ENCODE measurements at regions of chr14 and their contacts with region 1.

Region 1: DNA sequence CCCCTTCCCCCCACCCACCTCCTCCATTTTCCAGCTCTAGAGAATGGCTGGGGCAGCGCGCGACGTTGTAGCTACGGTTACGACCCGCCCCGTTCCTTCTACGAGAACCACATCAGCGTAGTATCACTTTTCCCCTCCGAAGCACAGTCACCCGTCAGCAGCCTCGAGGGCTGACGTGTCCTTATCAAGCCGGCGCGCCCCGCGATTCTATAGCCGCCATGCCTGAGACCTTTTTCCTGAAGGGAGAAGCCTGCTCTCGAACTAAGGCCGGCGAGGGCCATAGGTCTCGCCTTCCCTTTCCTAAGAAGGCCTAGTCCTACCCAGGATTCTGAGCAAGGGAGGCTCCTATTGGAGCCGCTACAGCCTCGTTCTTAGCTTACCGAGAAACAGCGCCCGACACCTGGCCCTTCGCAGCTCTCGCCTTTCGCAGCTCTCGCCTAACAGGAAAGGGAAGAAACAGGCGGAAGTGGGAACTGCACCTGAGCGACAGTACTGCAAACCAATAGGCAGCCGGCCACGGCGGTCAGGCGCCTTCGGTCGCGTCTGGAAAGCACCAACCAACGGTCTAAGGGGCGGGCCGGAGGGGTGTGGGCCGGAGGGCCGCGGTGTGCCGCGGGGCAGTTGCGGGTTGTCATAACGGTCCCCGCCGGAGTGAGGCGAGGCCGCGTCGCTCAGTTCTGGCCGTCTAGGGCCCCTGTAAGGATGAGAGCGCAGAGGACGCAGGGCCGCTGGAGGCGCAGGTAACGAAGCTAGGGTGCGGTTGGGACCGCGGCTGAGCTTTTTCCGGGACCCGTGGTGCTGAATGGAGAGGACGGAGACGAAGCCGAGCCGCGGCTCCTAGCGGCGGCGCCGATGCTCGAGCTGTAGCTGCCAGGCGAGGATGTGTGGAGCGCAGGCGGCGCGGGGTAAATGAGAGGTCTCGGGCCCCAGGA is at the starts of genes MGAT2 and RPL36AL:
- DNase-seq: peak; percentile 99
- ATAC-seq: peak; percentile 97
- H3K4me3 ChIP-seq: peak within 1 kb of the TSS; percentile 78 to 98 (median 93)
- H3K27ac ChIP-seq: peak within 1 kb of the TSS; percentile 94 to 99 (median 96)
- H3K4me1 ChIP-seq: peaks cover 20 to 34% of the 10 kb centered on the region in 2 donors
- H3K27me3 ChIP-seq: no peaks in the 10 kb centered on the region
- CTCF ChIP-seq: peak; percentile 7 to 53 (median 38)
- POLR2A ChIP-seq: peak; percentile 96 to 98
- total RNA-seq, gene MGAT2: 7.2 to 11.5 (median 9.6) TPM
- total RNA-seq, gene RPL36AL: 156 to 226 (median 203) TPM

Region 2: GRCh38 chr14:49585803-49586672 is 34.4 kb before region 1 on chr14 and contains the start of gene RPS29:
- in situ Hi-C with region 1: no loop called
- intact Hi-C with region 1: loop called (anchors 1 kb)
- DNase-seq: peak; percentile 97 to 98
- ATAC-seq: peak; percentile 99
- H3K4me3 ChIP-seq: peak within 1 kb of the TSS; percentile 78 to 99 (median 93)
- H3K27ac ChIP-seq: peak within 1 kb of the TSS; percentile 94 to 98 (median 96)
- H3K4me1 ChIP-seq: peaks cover 27 to 29% of the 10 kb centered on the region in 2 donors
- H3K27me3 ChIP-seq: no peaks in the 10 kb centered on the region
- CTCF ChIP-seq: no peak
- POLR2A ChIP-seq: peak; percentile 94 to 96
- total RNA-seq, gene RPS29: 6,799 to 10,395 (median 8,793) TPM

Region 3: DNA sequence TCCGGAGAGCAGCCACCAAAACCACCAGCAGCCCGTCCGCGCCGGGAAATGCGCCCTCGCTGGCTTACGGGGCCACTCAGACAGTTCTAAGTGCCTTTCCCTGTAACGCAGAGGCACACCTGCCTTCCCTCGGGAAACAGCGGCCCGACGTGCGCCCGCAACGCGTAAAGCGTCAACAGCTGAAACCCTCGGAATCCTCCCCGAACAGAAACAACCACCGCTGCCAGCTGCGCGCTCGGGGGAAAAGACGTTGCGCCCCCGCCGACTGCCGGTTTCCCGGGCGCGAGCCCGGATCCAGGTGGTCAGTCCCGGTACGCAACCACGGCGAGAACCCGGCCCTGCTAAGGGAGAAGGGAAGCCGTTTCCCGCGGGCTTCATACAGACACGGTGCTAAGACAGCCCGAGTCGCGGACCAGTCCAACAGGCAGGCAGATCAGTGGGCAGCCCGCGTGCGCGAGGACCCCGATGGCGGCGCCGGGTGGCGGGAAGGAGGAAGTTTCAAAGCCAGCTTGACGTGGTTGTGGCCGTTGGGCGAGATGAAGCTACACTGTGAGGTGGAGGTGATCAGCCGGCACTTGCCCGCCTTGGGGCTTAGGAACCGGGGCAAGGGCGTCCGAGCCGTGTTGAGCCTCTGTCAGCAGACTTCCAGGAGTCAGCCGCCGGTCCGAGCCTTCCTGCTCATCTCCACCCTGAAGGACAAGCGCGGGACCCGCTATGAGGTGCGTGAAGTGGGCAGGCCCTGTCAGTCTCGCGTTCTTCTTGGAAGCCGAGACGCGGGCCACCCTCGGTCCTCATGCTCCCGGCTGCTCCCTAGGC is 21.8 kb before region 1 on chr14 and contains the start of gene LRR1:
- in situ Hi-C with region 1: no loop called
- intact Hi-C with region 1: loop called (anchors 1 kb)
- DNase-seq: peak; percentile 62 to 71
- ATAC-seq: peak; percentile 90 to 94
- H3K4me3 ChIP-seq: peak within 1 kb of the TSS; percentile 81 to 92 (median 84)
- H3K27ac ChIP-seq: peak within 1 kb of the TSS; percentile 92 to 95 (median 92)
- H3K4me1 ChIP-seq: peaks cover 9% of the 10 kb centered on the region in 2 donors
- H3K27me3 ChIP-seq: no peaks in the 10 kb centered on the region
- CTCF ChIP-seq: peak in 1 of 5 experiments; percentile 8
- POLR2A ChIP-seq: peak; percentile 23 to 24
- total RNA-seq, gene LRR1: 1.3 to 5.8 (median 3.7) TPM

Region 4: DNA sequence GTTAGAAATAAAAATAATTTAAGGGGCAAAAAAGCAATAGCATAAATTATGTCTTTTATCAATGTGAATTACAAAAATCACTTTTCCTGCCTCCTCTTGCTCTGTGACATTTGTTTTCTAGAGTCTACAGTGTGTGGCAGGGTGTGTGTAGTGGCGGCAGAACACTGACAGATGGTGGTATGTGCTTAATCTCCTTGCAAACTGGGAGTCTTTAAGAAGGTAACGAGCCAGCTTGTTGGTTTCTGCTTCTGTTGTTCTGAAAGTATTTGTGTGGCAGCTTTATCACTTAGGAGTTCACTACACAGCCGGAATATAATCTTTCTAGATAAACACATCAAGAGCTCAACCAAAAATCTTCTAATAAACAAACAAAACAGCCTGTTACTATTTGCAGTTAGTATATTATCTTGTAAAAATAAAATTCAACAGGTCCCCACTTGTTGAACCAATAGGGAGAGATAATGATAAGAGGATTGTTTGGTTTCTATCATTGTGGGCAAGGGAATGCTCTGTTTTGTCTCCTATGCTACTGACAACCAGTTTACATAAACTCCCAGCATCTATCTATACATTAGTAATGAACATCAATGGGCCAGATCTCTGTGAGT is 763.3 kb after region 1 on chr14:
- in situ Hi-C with region 1: no loop called
- intact Hi-C with region 1: no loop called
- DNase-seq: no peak
- ATAC-seq: no peak
- H3K4me3 ChIP-seq: no peak overlapping the region
- H3K27ac ChIP-seq: no peak overlapping the region
- H3K4me1 ChIP-seq: no peaks in the 10 kb centered on the region
- H3K27me3 ChIP-seq: no peaks in the 10 kb centered on the region
- CTCF ChIP-seq: no peak
- POLR2A ChIP-seq: no peak

Region 5: GRCh38 chr14:51239813-51240803 is 1619.7 kb after region 1 on chr14 and contains the start of gene TMX1:
- in situ Hi-C with region 1: no loop called
- intact Hi-C with region 1: loop called (anchors 10 kb)
- DNase-seq: peak; percentile 94 to 98
- ATAC-seq: peak; percentile 100
- H3K4me3 ChIP-seq: peak within 1 kb of the TSS; percentile 89 to 98 (median 94)
- H3K27ac ChIP-seq: peak within 1 kb of the TSS; percentile 81 to 90 (median 88)
- H3K4me1 ChIP-seq: peaks cover 11 to 21% of the 10 kb centered on the region in 2 donors
- H3K27me3 ChIP-seq: no peaks in the 10 kb centered on the region
- CTCF ChIP-seq: no peak
- POLR2A ChIP-seq: peak; percentile 70 to 80
- total RNA-seq, gene TMX1: 13.5 to 17.3 (median 15.7) TPM

Measured in gastrocnemius medialis (tissue), 4 donors.